ENCODE measurements at regions of chr20 and their contacts with region 1.

Region 1: GRCh38 chr20:3686867-3687321 is 5.1 kb upstream of the ADAM33 start:
- DNase-seq: peak; percentile 85 to 92
- ATAC-seq: peak; percentile 89
- H3K4me3 ChIP-seq: no peak overlapping the region
- H3K27ac ChIP-seq: peak overlapping the region in 1 of 2 donors; percentile 81
- H3K4me1 ChIP-seq: peaks cover 0 to 1% of the 10 kb centered on the region in 2 donors
- H3K27me3 ChIP-seq: no peaks in the 10 kb centered on the region

Region 2: DNA sequence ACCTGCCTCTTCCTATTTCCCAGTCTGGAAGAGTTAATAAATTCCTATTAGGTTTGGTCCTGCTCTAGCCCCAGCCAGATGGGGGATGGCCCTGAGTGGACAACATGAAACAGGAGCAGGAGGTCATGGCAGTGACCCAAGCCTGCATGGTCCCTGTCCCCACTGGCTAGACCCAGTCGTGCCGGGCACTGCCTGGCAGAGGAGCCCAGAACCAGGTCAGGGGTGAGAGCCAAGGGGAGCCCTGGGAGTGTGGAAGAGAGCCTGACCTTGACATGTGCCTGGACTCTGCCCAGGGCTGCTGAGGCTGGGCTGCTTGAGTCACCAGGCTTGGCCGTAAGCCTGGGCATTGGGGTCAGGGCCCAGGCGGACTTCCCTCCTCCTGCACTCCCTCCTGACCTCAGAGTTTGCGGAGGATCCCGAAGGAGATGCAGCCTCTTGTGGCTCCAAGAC is 605.9 kb before region 1 on chr20:
- intact Hi-C with region 1: no loop called
- DNase-seq: peak; percentile 80 to 88
- ATAC-seq: peak; percentile 31
- H3K4me3 ChIP-seq: no peak overlapping the region
- H3K27ac ChIP-seq: no peak overlapping the region
- H3K4me1 ChIP-seq: no peaks in the 10 kb centered on the region
- H3K27me3 ChIP-seq: no peaks in the 10 kb centered on the region

Region 3: DNA sequence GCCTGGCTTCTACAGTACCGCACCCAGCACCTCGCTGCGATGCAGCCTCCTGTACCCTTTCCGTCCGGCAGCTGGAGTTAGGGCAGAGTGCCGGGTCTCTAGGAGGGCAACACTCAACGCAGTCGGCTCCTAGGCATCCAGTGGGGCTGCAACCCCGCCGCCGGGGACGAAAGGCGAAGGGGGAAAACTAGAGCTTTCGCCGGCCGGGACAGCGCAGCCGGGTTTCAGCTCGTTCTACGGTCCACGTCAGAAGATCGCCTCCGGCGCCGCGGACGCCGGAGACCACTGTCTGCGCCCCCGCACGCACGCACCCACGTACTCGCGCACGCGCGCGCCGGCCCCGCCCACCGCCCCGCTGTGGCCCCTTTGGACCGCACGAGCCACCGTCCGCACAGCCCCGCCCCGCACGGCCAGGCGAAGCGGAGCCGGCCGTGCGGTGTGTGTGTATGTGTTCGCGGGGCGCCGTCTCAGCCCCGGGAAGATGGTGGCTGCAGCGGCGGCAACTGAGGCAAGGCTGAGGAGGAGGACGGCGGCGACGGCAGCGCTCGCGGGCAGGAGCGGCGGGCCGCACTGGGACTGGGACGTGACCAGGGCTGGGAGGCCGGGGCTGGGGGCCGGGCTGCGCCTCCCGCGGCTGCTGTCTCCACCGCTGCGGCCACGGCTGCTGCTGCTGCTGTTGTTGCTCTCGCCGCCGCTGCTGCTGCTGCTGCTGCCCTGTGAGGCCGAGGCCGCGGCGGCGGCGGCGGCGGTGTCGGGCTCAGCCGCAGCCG is 216.1 kb before region 1 on chr20 and contains the start of gene ATRN:
- intact Hi-C with region 1: no loop called
- DNase-seq: peak; percentile 95 to 98
- ATAC-seq: peak; percentile 98
- H3K4me3 ChIP-seq: peak within 1 kb of the TSS; percentile 66 to 67
- H3K27ac ChIP-seq: peak within 1 kb of the TSS in 1 of 2 donors; percentile 46
- H3K4me1 ChIP-seq: peaks cover 0 to 7% of the 10 kb centered on the region in 2 donors
- H3K27me3 ChIP-seq: no peaks in the 10 kb centered on the region
- total RNA-seq, gene ATRN: 25.7 to 33.4 TPM

Region 4: DNA sequence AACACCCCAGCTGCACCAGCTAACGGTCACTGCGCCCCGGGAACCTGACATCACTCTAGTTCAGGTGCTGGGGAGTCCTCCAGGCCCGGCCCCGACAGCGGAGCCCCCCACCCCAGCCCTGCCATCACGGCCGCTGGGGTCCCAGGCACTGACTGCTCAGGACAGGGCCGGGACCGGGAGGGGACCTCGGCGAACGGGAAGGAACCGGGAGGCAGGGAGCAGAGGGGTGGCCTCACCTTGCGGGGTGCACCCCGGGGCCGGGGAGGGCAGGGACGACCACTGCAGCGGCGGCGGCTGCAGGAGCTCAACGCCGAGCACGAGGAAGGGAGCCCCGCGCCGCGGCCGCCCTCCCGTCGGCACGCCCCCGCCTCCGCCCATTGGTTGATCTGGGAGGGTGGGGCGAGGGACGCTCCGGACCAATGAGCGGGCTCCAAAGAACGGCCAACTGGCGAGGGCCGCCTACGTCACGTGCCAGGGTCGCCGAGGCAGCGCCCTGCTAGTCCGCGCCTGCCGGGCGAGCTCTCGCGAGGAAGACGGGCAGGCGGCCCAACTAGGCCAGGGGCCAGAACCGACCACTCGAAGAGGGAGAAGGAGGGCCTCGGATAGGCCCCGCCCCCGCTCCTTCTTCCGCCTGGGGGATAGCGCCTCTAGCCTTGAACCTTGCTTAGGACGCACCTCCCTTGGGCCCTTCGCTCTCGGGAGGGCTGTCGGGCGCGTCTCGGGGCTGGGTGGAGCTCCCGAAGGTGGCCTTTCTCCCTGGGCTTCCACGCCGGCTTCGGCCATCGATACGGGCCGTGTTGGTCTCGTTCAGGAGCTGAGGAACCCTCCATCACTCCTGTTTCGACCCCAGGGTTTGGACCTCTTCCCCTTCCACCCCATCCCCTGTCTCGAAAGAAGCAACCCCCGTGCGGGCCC is 80.8 kb after region 1 on chr20 and contains the start of gene ADISSP:
- intact Hi-C with region 1: loop called in 1 of 2 experiments (anchors 5 kb)
- DNase-seq: peak; percentile 100
- ATAC-seq: peak; percentile 97
- H3K4me3 ChIP-seq: peak within 1 kb of the TSS; percentile 22 to 52
- H3K27ac ChIP-seq: peak within 1 kb of the TSS; percentile 34 to 47
- H3K4me1 ChIP-seq: no peaks in the 10 kb centered on the region
- H3K27me3 ChIP-seq: no peaks in the 10 kb centered on the region
- total RNA-seq, gene ADISSP: 13.9 to 21.1 TPM

Region 5: DNA sequence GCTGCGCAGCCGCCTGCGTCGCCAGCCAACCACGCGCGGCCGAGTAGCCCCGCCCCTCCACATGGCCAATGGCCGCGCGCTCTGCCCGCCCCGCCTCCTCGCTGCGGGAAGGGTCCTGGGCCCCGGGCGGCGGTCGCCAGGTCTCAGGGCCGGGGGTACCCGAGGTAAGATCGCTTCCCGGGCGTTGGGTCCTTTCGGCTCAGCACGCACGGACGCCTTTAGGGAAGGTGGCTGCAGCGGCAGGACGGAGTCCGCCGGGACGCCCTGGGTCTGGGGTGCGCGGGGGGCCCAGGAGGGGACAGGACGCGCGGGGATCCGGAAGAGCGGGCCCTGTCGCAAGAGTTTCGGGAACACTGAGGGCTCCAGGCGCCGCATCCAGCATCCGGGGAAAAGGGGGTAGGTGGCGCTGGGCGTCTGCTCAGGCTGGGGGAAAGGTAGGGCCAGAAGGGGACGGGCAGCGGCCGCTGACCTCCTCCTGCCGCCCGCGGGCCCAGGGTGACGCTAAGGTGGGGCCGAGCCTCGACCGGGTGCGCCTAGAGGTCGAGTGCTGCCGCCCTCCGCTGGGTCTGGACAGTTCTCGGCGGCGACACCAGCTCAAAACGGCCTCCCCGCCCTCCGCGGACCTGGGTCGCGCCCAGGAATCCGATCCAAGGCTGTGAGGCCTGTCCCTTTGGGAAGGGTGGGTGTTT is 160.0 kb after region 1 on chr20 and contains the start of gene MAVS:
- intact Hi-C with region 1: loop called in 1 of 2 experiments (anchors 10 kb)
- DNase-seq: peak; percentile 92 to 96
- ATAC-seq: peak; percentile 97
- H3K4me3 ChIP-seq: peak within 1 kb of the TSS; percentile 22 to 92
- H3K27ac ChIP-seq: peak within 1 kb of the TSS; percentile 71 to 77
- H3K4me1 ChIP-seq: no peaks in the 10 kb centered on the region
- H3K27me3 ChIP-seq: no peaks in the 10 kb centered on the region
- total RNA-seq, gene MAVS: 33.4 to 36.1 TPM

Measured in aorta (tissue), 5 donors.